Endothelial cell of umbilical vein (primary cell): ENCODE measurements at regions of chr1 and their contacts with region 1.

Region 1: DNA sequence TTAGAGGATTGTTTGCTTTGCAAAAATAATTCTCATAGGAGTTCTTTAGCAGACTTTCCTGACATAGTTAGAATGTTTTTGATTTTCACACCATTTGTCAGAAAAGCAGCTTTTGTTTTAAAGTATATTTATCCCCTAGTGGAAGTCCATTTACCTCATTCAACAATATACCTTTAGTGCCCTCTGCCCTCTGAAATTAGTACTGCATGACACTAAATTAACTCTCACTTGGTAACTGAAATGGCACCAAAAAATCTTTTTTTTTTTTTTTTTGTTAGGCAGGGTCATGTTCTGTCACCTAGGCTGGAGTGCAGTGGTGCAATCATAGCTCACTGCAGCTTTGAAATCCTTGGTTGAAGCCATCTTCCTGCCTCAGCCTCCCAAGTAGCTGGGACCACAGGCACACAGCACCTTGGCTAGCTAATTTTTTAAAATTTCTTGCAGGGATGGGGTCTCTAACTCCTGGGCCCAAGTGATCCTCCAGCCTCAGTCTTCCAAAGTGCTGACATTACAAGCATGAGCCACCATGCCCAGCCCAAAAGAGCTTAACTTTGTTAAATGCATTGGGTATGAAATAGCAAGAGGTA is 13.6 kb downstream of the LRRC42 start:
- DNase-seq: peak; percentile 28
- H3K4me3 ChIP-seq: no peak overlapping the region
- H3K27ac ChIP-seq: no peak overlapping the region
- H3K4me1 ChIP-seq: peaks cover 7% of the 10 kb centered on the region
- H3K27me3 ChIP-seq: no peaks in the 10 kb centered on the region
- CTCF ChIP-seq: peak; percentile 19 to 25
- POLR2A ChIP-seq: no peak

Region 2: GRCh38 chr1:53945433-53946251 is 14.1 kb before region 1 on chr1 and contains the start of gene IFT25:
- CTCF ChIA-PET with region 1: interaction called, 11 read pairs
- POLR2A ChIA-PET with region 1: interaction called, 3 read pairs
- dilution Hi-C with region 1: no loop called
- intact Hi-C with region 1: no loop called
- DNase-seq: peak; percentile 95
- H3K4me3 ChIP-seq: peak within 1 kb of the TSS; percentile 88 to 95 (median 91)
- H3K27ac ChIP-seq: peak within 1 kb of the TSS; percentile 43
- H3K4me1 ChIP-seq: peaks cover 20% of the 10 kb centered on the region
- H3K27me3 ChIP-seq: no peaks in the 10 kb centered on the region
- CTCF ChIP-seq: no peak
- POLR2A ChIP-seq: peak; percentile 77
- total RNA-seq, gene IFT25: 31.4 and 34.0 TPM in 2 replicates

Region 3: GRCh38 chr1:53971718-53972117 is 12.0 kb after region 1 on chr1:
- CTCF ChIA-PET with region 1: interaction called, 10 read pairs
- POLR2A ChIA-PET with region 1: no interaction called
- dilution Hi-C with region 1: no loop called
- intact Hi-C with region 1: no loop called
- DNase-seq: no peak
- H3K4me3 ChIP-seq: no peak overlapping the region
- H3K27ac ChIP-seq: no peak overlapping the region
- H3K4me1 ChIP-seq: no peaks in the 10 kb centered on the region
- H3K27me3 ChIP-seq: no peaks in the 10 kb centered on the region
- CTCF ChIP-seq: no peak
- POLR2A ChIP-seq: no peak